T-cell (primary cell): ENCODE measurements at regions of chr10 and their contacts with region 1.

Region 1: DNA sequence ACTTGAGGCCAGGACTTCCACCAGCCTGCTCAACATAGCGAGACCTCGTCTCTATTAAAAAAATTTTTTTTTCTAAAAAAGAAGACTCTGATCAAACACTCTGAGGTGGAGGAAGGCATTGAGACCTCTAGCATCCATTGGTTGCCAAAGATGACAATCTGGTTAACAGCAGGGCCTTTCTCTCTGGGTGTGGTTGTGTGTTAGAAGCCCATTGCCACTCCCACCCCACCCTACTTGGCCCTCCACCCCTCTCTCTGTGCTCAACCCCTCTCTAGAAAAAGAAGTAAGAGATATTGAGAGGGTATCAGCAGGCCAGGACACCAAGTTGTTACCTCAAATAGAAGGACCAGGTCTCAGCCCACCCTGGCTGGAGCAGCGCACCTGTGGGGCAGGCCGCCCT is 57.4 kb upstream of the MXI1 start:
- DNase-seq: no peak
- ATAC-seq: no peak
- H3K4me3 ChIP-seq: no peak overlapping the region
- H3K4me3 Mint-ChIP-seq: no peak overlapping the region
- H3K27ac ChIP-seq: no peak overlapping the region
- H3K27ac Mint-ChIP-seq: no peak overlapping the region
- H3K4me1 ChIP-seq: no peaks in the 10 kb centered on the region
- H3K4me1 Mint-ChIP-seq: peaks cover under 1 to 16% (median 3%) of the 10 kb centered on the region in 3 donors
- H3K27me3 ChIP-seq: peaks cover 3 to 65% of the 10 kb centered on the region in 2 experiments
- H3K27me3 Mint-ChIP-seq: peaks cover 32 to 69% of the 10 kb centered on the region in 2 donors

Region 2: GRCh38 chr10:110118891-110119621 is 31.0 kb before region 1 on chr10:
- CTCF ChIA-PET with region 1: no interaction called
- POLR2A ChIA-PET with region 1: no interaction called
- DNase-seq: no peak
- ATAC-seq: no peak
- H3K4me3 ChIP-seq: no peak overlapping the region
- H3K4me3 Mint-ChIP-seq: no peak overlapping the region
- H3K27ac ChIP-seq: no peak overlapping the region
- H3K27ac Mint-ChIP-seq: peak overlapping the region; percentile 28 to 39
- H3K4me1 ChIP-seq: no peaks in the 10 kb centered on the region
- H3K4me1 Mint-ChIP-seq: peaks cover 2 to 13% (median 7%) of the 10 kb centered on the region in 3 donors
- H3K27me3 ChIP-seq: no peaks in the 10 kb centered on the region
- H3K27me3 Mint-ChIP-seq: no peaks in the 10 kb centered on the region

Region 3: GRCh38 chr10:110167149-110167548 is 17.1 kb after region 1 on chr10:
- CTCF ChIA-PET with region 1: no interaction called
- POLR2A ChIA-PET with region 1: interaction called, 3 to 11 read pairs
- DNase-seq: no peak
- ATAC-seq: no peak
- H3K4me3 ChIP-seq: no peak overlapping the region
- H3K4me3 Mint-ChIP-seq: no peak overlapping the region
- H3K27ac ChIP-seq: no peak overlapping the region
- H3K27ac Mint-ChIP-seq: no peak overlapping the region
- H3K4me1 ChIP-seq: peaks cover 2 to 19% of the 10 kb centered on the region in 2 experiments
- H3K4me1 Mint-ChIP-seq: peaks cover 18 to 30% (median 29%) of the 10 kb centered on the region in 3 donors
- H3K27me3 ChIP-seq: peaks cover 22 to 75% of the 10 kb centered on the region in 2 experiments
- H3K27me3 Mint-ChIP-seq: peaks cover 57 to 82% of the 10 kb centered on the region in 2 donors